RWPE1 (cell line): ENCODE measurements at regions of chr12 and their contacts with region 1.

Region 1: GRCh38 chr12:48857278-48857994 is 5.5 kb upstream of the DDX23 start:
- DNase-seq: no peak
- H3K27ac ChIP-seq: no peak overlapping the region
- CTCF ChIP-seq: no peak

Region 2: GRCh38 chr12:48988030-48988649 is 130.7 kb after region 1 on chr12:
- CTCF ChIA-PET with region 1: interaction called, 17 read pairs
- POLR2A ChIA-PET with region 1: no interaction called
- DNase-seq: peak; percentile 65
- H3K27ac ChIP-seq: no peak overlapping the region
- CTCF ChIP-seq: peak; percentile 85

Region 3: DNA sequence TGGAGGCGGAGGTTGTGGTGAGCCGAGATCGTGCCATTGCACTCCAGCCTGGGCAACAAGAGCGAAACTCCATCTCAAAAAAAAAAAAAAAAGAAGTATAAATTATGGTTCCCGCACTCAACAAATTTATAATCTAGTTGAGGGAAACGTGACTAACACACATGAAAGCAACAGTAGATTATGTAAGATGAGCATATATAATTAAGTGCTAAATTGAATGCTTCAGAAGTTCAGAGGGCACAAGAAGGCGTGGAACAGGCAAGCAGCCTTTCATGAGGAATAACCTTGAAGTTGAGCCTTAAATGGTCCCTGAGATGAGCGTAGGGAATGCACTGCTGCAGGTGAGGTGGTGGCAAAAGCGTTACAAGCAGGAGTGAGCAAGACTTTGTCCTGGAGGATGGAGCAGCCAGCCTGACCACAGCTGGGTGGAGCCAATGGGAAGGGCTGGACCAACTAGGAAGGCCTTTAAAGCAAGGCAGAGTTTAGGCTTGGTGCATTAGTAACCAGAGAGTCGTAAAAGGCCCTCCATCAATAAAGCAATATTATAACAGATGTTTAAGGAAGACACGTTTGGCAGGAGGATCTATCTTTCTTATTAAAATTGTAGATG is 362.1 kb after region 1 on chr12:
- CTCF ChIA-PET with region 1: no interaction called
- POLR2A ChIA-PET with region 1: no interaction called
- DNase-seq: no peak
- H3K27ac ChIP-seq: no peak overlapping the region
- CTCF ChIP-seq: no peak